GM12878 (cell line): ENCODE measurements at regions of chr6 and their contacts with region 1.

Region 1: GRCh38 chr6:42210551-42210950 is 7.1 kb downstream of the MRPS10 start:
- DNase-seq: no peak
- ATAC-seq: no peak
- H3K4me3 ChIP-seq: no peak overlapping the region
- H3K27ac ChIP-seq: no peak overlapping the region
- H3K4me1 ChIP-seq: peaks cover 18% of the 10 kb centered on the region
- H3K27me3 ChIP-seq: no peaks in the 10 kb centered on the region
- CTCF ChIP-seq: no peak
- EP300 ChIP-seq: no peak
- POLR2A ChIP-seq: no peak
- RAD21 ChIP-seq: no peak

Region 2: DNA sequence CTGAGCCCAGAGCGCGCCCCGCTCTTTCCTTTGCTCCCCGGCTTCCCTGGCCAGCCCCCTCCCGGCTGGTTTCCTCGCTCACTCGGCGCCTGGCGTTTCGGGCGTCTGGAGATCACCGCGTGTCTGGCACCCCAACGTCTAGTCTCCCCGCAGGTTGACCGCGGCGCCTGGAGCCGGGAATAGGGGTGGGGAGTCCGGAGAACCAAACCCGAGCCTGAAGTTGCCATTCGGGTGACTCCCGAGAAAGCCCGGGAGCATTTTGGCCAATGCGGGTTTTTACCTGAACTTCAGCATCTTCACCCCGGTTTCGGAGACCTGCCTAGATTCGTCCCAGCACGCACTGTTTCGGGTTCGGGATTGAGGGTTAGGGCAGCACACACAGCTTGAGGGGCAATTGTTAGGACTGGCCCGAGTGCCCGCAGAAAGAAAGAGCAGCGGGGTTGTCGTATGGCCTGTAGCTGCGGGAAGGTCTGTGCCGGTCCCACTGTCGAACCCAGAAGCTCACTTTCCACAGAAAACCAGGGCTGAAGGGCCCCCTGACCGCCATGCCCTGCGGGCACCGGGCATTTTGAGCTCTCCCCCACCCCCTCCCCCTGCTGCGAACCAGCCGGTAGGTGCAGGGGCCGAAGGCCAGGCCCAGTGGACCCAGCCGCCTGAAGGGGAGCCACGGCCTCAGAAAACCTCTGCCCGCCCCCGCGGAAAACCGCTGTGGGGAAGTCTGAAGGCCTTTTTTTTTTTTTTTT is 662.3 kb before region 1 on chr6:
- CTCF ChIA-PET with region 1: no interaction called
- POLR2A ChIA-PET with region 1: no interaction called
- RAD21 ChIA-PET with region 1: no interaction called
- SMC1A ChIA-PET with region 1: no interaction called
- in situ Hi-C with region 1: no loop called
- intact Hi-C with region 1: no loop called
- DNase-seq: no peak
- ATAC-seq: peak; percentile 23
- H3K4me3 ChIP-seq: peak overlapping the region; percentile 91
- H3K27ac ChIP-seq: no peak overlapping the region
- H3K4me1 ChIP-seq: peaks cover 16% of the 10 kb centered on the region
- H3K27me3 ChIP-seq: no peaks in the 10 kb centered on the region
- CTCF ChIP-seq: no peak; a peak in 1 of 6 replicates
- EP300 ChIP-seq: no peak; a peak in 1 of 4 replicates
- POLR2A ChIP-seq: no peak; the same call in 1 of the 2 replicates
- RAD21 ChIP-seq: peak; percentile 38; the same call in 1 of the 2 replicates

Region 3: DNA sequence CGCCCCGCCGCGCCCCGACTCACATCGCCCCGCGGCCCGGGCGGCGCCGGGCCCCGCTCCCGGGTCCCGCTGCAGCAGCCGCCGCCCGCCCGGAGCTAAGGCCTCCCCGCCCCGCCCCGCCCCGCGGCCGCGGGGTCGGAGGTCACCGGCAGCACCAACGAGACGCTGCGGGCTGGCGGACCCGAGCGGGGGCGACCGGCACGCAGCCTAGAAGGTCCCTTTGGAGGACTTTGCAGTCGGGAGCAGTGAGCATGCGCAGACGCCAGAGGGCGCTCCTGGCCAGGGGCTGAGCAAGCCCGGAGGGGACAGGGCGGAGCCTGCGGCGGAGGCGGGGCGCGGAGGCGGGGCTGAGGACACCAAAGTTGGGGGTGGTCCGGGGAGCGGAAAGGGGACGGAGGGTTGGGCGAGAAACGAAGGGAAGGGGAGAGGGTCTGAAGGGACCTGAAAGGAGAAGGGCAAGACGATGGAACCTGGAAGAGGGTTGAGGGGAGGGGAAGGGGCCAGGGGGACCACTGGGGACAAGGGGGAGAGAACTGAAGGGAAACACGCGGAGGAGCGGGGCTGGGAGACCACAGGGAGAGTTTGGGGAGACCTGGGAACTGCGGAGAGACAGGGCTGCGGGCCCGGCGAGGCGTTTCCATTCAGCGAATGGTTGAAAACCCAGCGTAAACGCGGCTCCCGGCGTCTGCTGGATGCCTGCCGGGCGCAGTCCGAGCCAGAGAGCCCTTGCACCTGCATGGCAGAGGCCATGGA is 430.6 kb before region 1 on chr6 and contains the start of gene FRS3:
- CTCF ChIA-PET with region 1: no interaction called
- POLR2A ChIA-PET with region 1: no interaction called
- RAD21 ChIA-PET with region 1: no interaction called
- SMC1A ChIA-PET with region 1: interaction called, 3 read pairs
- in situ Hi-C with region 1: no loop called
- intact Hi-C with region 1: loop called (anchors 5 kb)
- DNase-seq: peak; percentile 78
- ATAC-seq: peak; percentile 95
- H3K4me3 ChIP-seq: peak within 1 kb of the TSS; percentile 74
- H3K27ac ChIP-seq: no peak within 1 kb of the TSS
- H3K4me1 ChIP-seq: peaks cover 18% of the 10 kb centered on the region
- H3K27me3 ChIP-seq: no peaks in the 10 kb centered on the region
- CTCF ChIP-seq: peak; percentile 94 to 99 (median 97); a peak in 5 of 6 replicates
- EP300 ChIP-seq: 0 out of 4 replicates have a peak, but pooled peaks of 1 of the 2 experiments have one; percentile 30
- POLR2A ChIP-seq: no peak
- RAD21 ChIP-seq: peak; percentile 97
- polyA plus RNA-seq, gene FRS3: 0.05 to 0.09 TPM

Region 4: DNA sequence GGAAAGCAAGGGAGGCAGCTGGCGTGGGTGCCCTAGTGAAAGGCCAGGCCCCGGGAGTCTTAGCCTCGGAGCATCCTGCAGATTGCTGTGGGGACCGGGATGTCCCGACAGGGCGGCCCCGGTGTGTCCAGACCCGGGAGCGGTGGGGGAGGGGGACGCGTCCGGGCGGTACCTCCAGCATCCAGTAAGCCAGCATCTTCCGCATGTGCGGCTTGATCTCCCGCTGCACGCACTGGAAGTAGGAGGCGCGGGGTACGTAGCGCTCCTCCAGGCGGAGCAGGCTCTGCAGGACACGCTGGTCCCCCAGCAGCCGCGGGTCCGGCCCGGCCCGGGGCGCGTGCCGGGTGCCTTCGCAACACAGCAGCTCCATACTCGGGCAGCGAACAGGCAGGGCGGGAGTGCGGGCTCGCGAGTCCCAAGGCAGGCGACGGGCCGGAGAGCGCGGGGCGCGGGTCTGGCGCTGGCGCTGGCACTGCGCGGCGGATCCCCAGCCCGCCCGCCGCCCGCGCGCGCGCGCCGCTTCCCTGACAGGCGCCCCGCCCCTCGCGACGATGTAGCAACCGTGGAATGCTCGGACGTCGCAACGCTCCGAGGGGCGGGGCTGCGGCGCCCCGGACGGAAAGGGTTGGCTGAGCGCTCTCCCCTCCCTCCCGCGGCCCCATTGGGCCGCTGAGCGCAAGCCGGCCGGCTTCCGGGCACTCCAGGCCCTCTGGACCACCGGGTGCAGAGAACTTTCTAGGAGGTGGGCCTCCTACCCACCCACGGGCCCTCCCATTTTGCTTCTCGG is 269.1 kb before region 1 on chr6 and contains the start of gene CCND3:
- CTCF ChIA-PET with region 1: no interaction called
- POLR2A ChIA-PET with region 1: no interaction called
- RAD21 ChIA-PET with region 1: no interaction called
- SMC1A ChIA-PET with region 1: interaction called, 3 read pairs
- in situ Hi-C with region 1: no loop called
- intact Hi-C with region 1: loop called (anchors 5 kb)
- DNase-seq: peak; percentile 44
- ATAC-seq: peak; percentile 94
- H3K4me3 ChIP-seq: peak within 1 kb of the TSS; percentile 98
- H3K27ac ChIP-seq: peak within 1 kb of the TSS; percentile 61
- H3K4me1 ChIP-seq: peaks cover 29% of the 10 kb centered on the region
- H3K27me3 ChIP-seq: no peaks in the 10 kb centered on the region
- CTCF ChIP-seq: no peak
- EP300 ChIP-seq: no peak
- POLR2A ChIP-seq: peak; percentile 27; the same call in 1 of the 2 replicates
- RAD21 ChIP-seq: no peak
- polyA plus RNA-seq, gene CCND3: 6.0 to 16.3 TPM

Region 5: DNA sequence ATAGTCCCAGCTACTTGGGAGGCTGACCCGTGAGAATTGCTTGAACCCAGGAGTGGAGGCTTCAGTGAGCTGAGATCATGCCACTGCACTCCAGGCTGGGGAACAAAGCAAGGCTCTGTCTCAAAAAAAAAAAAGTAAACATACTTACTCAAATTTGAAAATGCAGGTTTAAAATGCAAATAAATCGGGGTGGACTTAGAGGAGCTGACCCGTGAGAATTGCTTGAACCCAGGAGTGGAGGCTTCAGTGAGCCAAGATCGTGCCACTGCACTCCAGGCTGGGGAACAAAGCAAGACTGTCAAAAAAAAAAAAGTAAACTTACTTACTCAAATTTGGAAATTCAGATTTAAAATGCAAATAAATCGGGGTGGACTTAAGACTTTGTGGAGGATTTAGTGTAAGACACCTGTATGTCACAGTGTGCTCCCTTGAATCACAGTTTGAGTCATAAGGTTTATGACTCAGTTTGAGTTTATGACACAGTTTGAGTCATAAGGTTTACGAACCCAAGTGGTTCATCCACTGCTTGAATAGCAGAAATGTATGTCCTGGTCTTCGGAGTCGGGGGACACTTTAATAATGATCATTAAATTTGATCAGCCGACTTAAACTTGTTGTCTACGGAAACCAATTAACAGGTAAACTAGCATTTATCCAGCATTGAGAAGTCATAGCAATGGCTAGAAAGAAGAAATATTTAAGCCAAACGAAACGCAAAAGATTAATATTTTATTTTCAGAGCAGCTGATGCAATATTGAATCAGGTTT is 13.9 kb after region 1 on chr6:
- CTCF ChIA-PET with region 1: interaction called, 68 read pairs
- POLR2A ChIA-PET with region 1: interaction called, 3 read pairs
- RAD21 ChIA-PET with region 1: interaction called, 17 read pairs
- SMC1A ChIA-PET with region 1: interaction called, 49 read pairs
- in situ Hi-C with region 1: no loop called
- intact Hi-C with region 1: no loop called
- DNase-seq: peak; percentile 94
- ATAC-seq: peak; percentile 94
- H3K4me3 ChIP-seq: no peak overlapping the region
- H3K27ac ChIP-seq: no peak overlapping the region
- H3K4me1 ChIP-seq: no peaks in the 10 kb centered on the region; the same call in 1 of the 2 replicates
- H3K27me3 ChIP-seq: no peaks in the 10 kb centered on the region
- CTCF ChIP-seq: no peak
- EP300 ChIP-seq: peak; percentile 71 to 96
- POLR2A ChIP-seq: no peak
- RAD21 ChIP-seq: no peak

Region 6: GRCh38 chr6:42230345-42231321 is 20.1 kb after region 1 on chr6:
- CTCF ChIA-PET with region 1: interaction called, 68 read pairs
- POLR2A ChIA-PET with region 1: interaction called, 6 read pairs
- RAD21 ChIA-PET with region 1: interaction called, 17 read pairs
- SMC1A ChIA-PET with region 1: interaction called, 49 read pairs
- in situ Hi-C with region 1: no loop called
- intact Hi-C with region 1: no loop called
- DNase-seq: no peak
- ATAC-seq: peak; percentile 79
- H3K4me3 ChIP-seq: no peak overlapping the region
- H3K27ac ChIP-seq: no peak overlapping the region
- H3K4me1 ChIP-seq: no peaks in the 10 kb centered on the region
- H3K27me3 ChIP-seq: no peaks in the 10 kb centered on the region
- CTCF ChIP-seq: peak; percentile 46 to 70 (median 54); a peak in 5 of 6 replicates
- EP300 ChIP-seq: no peak
- POLR2A ChIP-seq: no peak
- RAD21 ChIP-seq: peak; percentile 66